Aorta (tissue), 5 donors: ENCODE measurements at regions of chr7 and their contacts with region 1.

Region 1: GRCh38 chr7:25125137-25125946 is at the start of gene CYCS:
- DNase-seq: peak; percentile 99 to 100
- ATAC-seq: peak; percentile 99
- H3K4me3 ChIP-seq: peak within 1 kb of the TSS; percentile 67 to 71
- H3K27ac ChIP-seq: peak within 1 kb of the TSS; percentile 76 to 86
- H3K4me1 ChIP-seq: no peaks in the 10 kb centered on the region
- H3K27me3 ChIP-seq: no peaks in the 10 kb centered on the region
- total RNA-seq, gene CYCS: 36.3 to 63.8 TPM

Region 2: GRCh38 chr7:25179771-25180591 is 54.6 kb after region 1 on chr7:
- intact Hi-C with region 1: loop called in 1 of 2 experiments (anchors 5 kb)
- DNase-seq: peak; percentile 94 to 98
- ATAC-seq: peak; percentile 96
- H3K4me3 ChIP-seq: peak overlapping the region; percentile 74 to 99
- H3K27ac ChIP-seq: peak overlapping the region; percentile 79 to 83
- H3K4me1 ChIP-seq: no peaks in the 10 kb centered on the region
- H3K27me3 ChIP-seq: no peaks in the 10 kb centered on the region